Tibial artery (tissue), 4 donors: ENCODE measurements at regions of chr1 and their contacts with region 1.

Region 1: DNA sequence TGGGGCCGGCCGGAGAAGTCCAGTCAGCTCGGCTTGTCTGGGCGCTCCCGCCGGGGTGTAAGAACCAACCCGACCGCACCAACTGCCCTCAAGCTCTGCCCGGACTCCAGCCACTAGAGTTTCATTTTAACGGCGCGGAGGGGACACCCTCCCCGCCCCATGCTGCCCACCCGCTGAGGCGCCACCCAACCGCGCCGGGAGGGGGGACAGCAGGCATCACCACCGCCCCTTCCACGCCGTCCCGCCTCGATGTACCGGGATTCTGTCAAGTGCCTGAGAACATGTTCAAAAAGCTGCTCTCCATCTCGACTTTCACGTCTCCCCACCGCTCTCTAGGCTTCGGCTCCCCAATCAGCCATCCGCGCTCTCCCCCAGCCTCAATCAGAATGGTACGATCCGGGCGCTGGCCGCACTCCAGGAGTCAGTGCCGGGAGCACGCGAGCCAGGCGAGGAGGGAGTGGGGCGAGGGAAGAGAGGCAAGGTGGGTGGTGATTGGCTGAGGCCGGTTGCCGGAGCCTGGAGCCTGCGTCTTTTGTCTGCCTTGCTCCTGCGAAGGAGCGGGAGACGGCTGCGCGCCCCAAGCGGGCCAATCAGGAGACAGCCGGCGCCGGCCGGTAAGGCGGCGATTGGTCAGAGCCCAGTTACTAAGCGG is at the start of gene PIK3R3:
- DNase-seq: peak; percentile 97 to 99
- H3K4me3 ChIP-seq: peak within 1 kb of the TSS; percentile 68 to 70
- H3K27ac ChIP-seq: peak within 1 kb of the TSS; percentile 91 to 93
- H3K4me1 ChIP-seq: peaks cover 0 to 37% (median 16%) of the 10 kb centered on the region in 4 donors
- H3K27me3 ChIP-seq: no peaks in the 10 kb centered on the region
- CTCF ChIP-seq: peak in 1 of 2 experiments; percentile 15

Region 2: DNA sequence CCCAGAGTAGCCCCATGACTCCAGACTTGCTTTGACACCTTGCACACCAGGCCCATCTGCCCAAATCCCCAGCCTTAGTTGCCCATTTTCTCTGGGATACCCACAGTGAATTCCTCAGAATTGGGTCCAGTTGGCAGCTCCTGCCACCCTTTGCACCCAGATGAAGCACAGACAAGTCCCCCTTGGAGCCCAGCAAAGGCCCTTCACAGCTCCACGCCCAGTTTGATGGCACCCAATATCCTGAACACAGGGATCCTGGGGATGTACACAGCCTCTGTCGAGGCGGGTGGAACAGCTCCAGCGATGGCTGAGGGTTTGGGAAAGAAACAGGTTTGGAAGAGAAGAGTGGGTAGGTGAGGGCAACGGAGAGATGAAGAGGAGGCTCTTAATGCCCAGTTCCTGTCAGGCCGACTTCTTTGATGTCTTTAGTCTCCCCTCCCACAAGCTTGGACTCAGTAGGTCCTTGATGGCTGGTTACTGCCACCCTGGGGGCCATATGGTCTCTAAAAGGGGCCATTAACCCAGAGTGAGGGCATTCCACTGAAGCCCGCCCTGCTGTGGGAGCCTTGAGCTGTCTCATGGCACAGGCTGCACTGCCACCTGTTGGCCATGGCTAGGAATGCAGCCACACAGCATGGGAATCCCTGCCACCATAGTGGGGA is 1480.1 kb before region 1 on chr1:
- intact Hi-C with region 1: no loop called
- DNase-seq: peak; percentile 80 to 83
- H3K4me3 ChIP-seq: no peak overlapping the region
- H3K27ac ChIP-seq: no peak overlapping the region
- H3K4me1 ChIP-seq: no peaks in the 10 kb centered on the region
- H3K27me3 ChIP-seq: no peaks in the 10 kb centered on the region
- CTCF ChIP-seq: peak; percentile 87 to 93

Region 3: GRCh38 chr1:46179138-46180081 is 46.8 kb after region 1 on chr1:
- intact Hi-C with region 1: loop called (anchors 2 kb)
- DNase-seq: peak; percentile 89
- H3K4me3 ChIP-seq: no peak overlapping the region
- H3K27ac ChIP-seq: peak overlapping the region in 1 of 2 donors; percentile 33
- H3K4me1 ChIP-seq: peaks cover 0 to 47% (median 31%) of the 10 kb centered on the region in 4 donors
- H3K27me3 ChIP-seq: no peaks in the 10 kb centered on the region
- CTCF ChIP-seq: peak; percentile 91 to 93